GM12878 (cell line): ENCODE measurements at regions of chr1 and their contacts with region 1.

Region 1: GRCh38 chr1:36149237-36149972 is at the start of gene TRAPPC3:
- DNase-seq: peak; percentile 96
- ATAC-seq: peak; percentile 90
- H3K4me3 ChIP-seq: peak within 1 kb of the TSS; percentile 86
- H3K27ac ChIP-seq: peak within 1 kb of the TSS; percentile 77
- H3K4me1 ChIP-seq: peaks cover 30% of the 10 kb centered on the region
- H3K27me3 ChIP-seq: no peaks in the 10 kb centered on the region
- CTCF ChIP-seq: peak; percentile 94 to 100 (median 99); a peak in 5 of 6 replicates
- EP300 ChIP-seq: peak in 1 of 2 experiments; percentile 73; a peak in 1 of 4 replicates
- POLR2A ChIP-seq: peak; percentile 92
- RAD21 ChIP-seq: peak; percentile 93
- polyA plus RNA-seq, gene TRAPPC3: 14.7 to 24.5 TPM

Region 2: DNA sequence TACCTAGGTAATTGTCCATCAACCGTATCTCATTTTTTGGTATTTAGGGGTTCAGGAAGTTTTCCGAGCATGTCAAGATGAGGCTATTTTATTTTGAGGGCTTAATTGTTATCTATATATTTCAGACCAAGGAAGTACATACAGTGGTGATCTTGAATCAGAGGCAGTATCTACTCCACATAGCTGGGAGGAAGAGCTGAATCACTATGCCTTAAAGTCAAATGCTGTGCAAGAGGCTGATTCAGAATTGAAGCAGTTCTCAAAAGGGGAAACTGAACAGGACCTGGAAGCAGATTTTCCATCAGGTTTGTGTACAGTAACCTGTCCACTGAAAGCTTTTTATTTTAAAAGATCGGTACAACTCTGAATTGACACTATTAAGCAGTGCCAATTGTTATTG is 750.7 kb before region 1 on chr1:
- CTCF ChIA-PET with region 1: no interaction called
- POLR2A ChIA-PET with region 1: no interaction called
- RAD21 ChIA-PET with region 1: no interaction called
- SMC1A ChIA-PET with region 1: no interaction called
- in situ Hi-C with region 1: no loop called
- intact Hi-C with region 1: no loop called
- DNase-seq: no peak
- ATAC-seq: no peak
- H3K4me3 ChIP-seq: no peak overlapping the region
- H3K27ac ChIP-seq: no peak overlapping the region
- H3K4me1 ChIP-seq: no peaks in the 10 kb centered on the region
- H3K27me3 ChIP-seq: no peaks in the 10 kb centered on the region
- CTCF ChIP-seq: no peak
- EP300 ChIP-seq: no peak
- POLR2A ChIP-seq: no peak
- RAD21 ChIP-seq: no peak

Region 3: GRCh38 chr1:36160949-36161485 is 11.6 kb after region 1 on chr1:
- CTCF ChIA-PET with region 1: interaction called, 136 read pairs
- POLR2A ChIA-PET with region 1: interaction called, 86 read pairs
- RAD21 ChIA-PET with region 1: interaction called, 146 read pairs
- SMC1A ChIA-PET with region 1: interaction called, 135 read pairs
- in situ Hi-C with region 1: no loop called
- intact Hi-C with region 1: no loop called
- DNase-seq: no peak
- ATAC-seq: peak; percentile 76
- H3K4me3 ChIP-seq: peak overlapping the region; percentile 85
- H3K27ac ChIP-seq: peak overlapping the region; percentile 95
- H3K4me1 ChIP-seq: peaks cover 51% of the 10 kb centered on the region
- H3K27me3 ChIP-seq: no peaks in the 10 kb centered on the region
- CTCF ChIP-seq: peak; percentile 32 to 49 (median 44); a peak in 3 of 6 replicates
- EP300 ChIP-seq: no peak
- POLR2A ChIP-seq: peak; percentile 82
- RAD21 ChIP-seq: no peak

Region 4: DNA sequence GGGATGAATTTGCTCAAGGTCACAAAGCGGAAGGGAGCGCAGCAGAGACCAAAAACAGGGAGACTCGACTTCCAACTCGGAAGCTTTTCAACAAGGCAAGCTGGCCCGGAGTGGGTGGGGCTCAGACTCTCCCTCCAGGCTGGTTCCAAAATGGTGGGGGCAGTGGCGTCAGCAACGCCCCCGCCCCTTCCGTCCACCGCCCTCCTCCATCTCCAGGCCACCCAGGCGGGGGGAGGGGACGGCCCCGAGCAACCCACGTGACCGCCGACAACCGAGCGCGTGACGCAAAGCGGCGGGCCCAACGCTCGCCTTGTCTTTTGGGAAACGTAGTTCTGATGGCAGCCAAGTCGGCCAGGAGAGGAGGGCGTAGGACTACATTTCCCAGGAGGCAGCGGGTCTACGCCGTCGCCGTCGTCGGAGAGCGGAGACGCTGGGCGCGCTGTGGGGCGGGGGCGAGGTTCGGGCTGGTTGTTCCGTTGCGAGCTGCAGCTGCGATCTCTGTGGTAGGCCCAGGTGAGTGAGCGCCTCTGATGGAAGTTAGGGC is 74.7 kb after region 1 on chr1 and contains the start of gene THRAP3:
- CTCF ChIA-PET with region 1: interaction called, 29 read pairs
- POLR2A ChIA-PET with region 1: interaction called, 23 read pairs
- RAD21 ChIA-PET with region 1: interaction called, 54 read pairs
- SMC1A ChIA-PET with region 1: interaction called, 27 read pairs
- in situ Hi-C with region 1: no loop called
- intact Hi-C with region 1: loop called (anchors 1 kb)
- DNase-seq: peak; percentile 97
- ATAC-seq: peak; percentile 95
- H3K4me3 ChIP-seq: peak within 1 kb of the TSS; percentile 95
- H3K27ac ChIP-seq: peak within 1 kb of the TSS; percentile 88
- H3K4me1 ChIP-seq: peaks cover 7% of the 10 kb centered on the region; the same call in 1 of the 2 replicates
- H3K27me3 ChIP-seq: no peaks in the 10 kb centered on the region
- CTCF ChIP-seq: no peak
- EP300 ChIP-seq: 0 out of 4 replicates have a peak, but pooled peaks of 1 of the 2 experiments have one; percentile 17
- POLR2A ChIP-seq: peak; percentile 91
- RAD21 ChIP-seq: no peak
- polyA plus RNA-seq, gene THRAP3: 76.3 to 173 TPM

Region 5: GRCh38 chr1:36300526-36300925 is 151.1 kb after region 1 on chr1:
- CTCF ChIA-PET with region 1: interaction called, 13 read pairs
- POLR2A ChIA-PET with region 1: interaction called, 4 read pairs
- RAD21 ChIA-PET with region 1: interaction called, 15 read pairs
- SMC1A ChIA-PET with region 1: interaction called, 12 read pairs
- in situ Hi-C with region 1: no loop called
- intact Hi-C with region 1: no loop called
- DNase-seq: no peak
- ATAC-seq: no peak
- H3K4me3 ChIP-seq: no peak overlapping the region
- H3K27ac ChIP-seq: no peak overlapping the region
- H3K4me1 ChIP-seq: peaks cover 10% of the 10 kb centered on the region
- H3K27me3 ChIP-seq: no peaks in the 10 kb centered on the region
- CTCF ChIP-seq: no peak
- EP300 ChIP-seq: no peak
- POLR2A ChIP-seq: no peak
- RAD21 ChIP-seq: no peak

Region 6: GRCh38 chr1:36385410-36386257 is 236.2 kb after region 1 on chr1 and contains the start of gene STK40:
- CTCF ChIA-PET with region 1: interaction called, 12 read pairs
- POLR2A ChIA-PET with region 1: interaction called, 22 read pairs
- RAD21 ChIA-PET with region 1: interaction called, 9 read pairs
- SMC1A ChIA-PET with region 1: interaction called, 6 read pairs
- in situ Hi-C with region 1: no loop called
- intact Hi-C with region 1: loop called (anchors 10 kb)
- DNase-seq: peak; percentile 95
- ATAC-seq: peak; percentile 90
- H3K4me3 ChIP-seq: peak within 1 kb of the TSS; percentile 85
- H3K27ac ChIP-seq: peak within 1 kb of the TSS; percentile 99
- H3K4me1 ChIP-seq: peaks cover 44% of the 10 kb centered on the region
- H3K27me3 ChIP-seq: no peaks in the 10 kb centered on the region
- CTCF ChIP-seq: no peak
- EP300 ChIP-seq: no peak
- POLR2A ChIP-seq: peak; percentile 50
- RAD21 ChIP-seq: no peak
- polyA plus RNA-seq, gene STK40: 0.27 to 2.1 TPM